ENCODE measurements at regions of chr1 and their contacts with region 1.

Region 1: DNA sequence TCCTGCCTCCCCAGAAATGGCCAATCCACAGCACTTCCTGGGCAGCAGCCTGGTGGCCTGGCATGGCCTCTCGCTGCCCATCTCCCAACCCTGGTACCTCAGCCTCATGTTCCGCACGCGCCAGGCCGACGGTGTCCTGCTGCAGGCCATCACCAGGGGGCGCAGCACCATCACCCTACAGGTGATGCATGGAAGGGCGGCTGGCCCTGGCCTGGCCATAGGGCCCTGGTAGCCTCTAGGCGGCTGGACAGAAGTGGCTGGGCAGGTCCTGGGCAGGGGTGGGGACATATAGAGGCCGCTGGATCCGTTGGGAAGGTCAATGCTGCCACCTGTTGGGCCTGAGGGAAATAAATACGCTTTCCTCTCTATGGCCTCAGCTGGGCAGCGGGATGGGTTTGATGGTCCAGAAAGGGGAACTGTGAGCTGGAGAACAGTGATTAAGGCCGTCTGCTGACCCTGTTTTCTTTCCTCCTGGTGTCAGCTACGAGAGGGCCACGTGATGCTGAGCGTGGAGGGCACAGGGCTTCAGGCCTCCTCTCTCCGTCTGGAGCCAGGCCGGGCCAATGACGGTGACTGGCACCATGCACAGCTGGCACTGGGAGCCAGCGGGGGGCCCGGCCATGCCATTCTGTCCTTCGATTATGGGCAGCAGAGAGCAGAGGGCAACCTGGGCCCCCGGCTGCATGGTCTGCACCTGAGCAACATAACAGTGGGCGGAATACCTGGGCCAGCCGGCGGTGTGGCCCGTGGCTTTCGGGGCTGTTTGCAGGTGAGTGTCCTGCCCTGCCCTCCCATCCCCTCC is 14.5 kb downstream of the CELSR2 start:
- DNase-seq: peak; percentile 97 to 98
- H3K4me3 ChIP-seq: no peak overlapping the region
- H3K27ac ChIP-seq: no peak overlapping the region
- H3K4me1 ChIP-seq: no peaks in the 10 kb centered on the region
- H3K27me3 ChIP-seq: no peaks in the 10 kb centered on the region
- CTCF ChIP-seq: peak; percentile 94 to 100 (median 98)
- POLR2A ChIP-seq: no peak

Region 2: GRCh38 chr1:109201123-109201703 is 62.6 kb before region 1 on chr1:
- intact Hi-C with region 1: loop called (anchors 5 kb)
- DNase-seq: peak; percentile 49
- H3K4me3 ChIP-seq: no peak overlapping the region
- H3K27ac ChIP-seq: no peak overlapping the region
- H3K4me1 ChIP-seq: no peaks in the 10 kb centered on the region
- H3K27me3 ChIP-seq: no peaks in the 10 kb centered on the region
- CTCF ChIP-seq: peak in 5 of 6 experiments; percentile 19 to 49 (median 42)
- POLR2A ChIP-seq: no peak

Region 3: GRCh38 chr1:109404838-109405237 is 141.0 kb after region 1 on chr1:
- intact Hi-C with region 1: loop called (anchors 5 kb)
- DNase-seq: no peak
- H3K4me3 ChIP-seq: no peak overlapping the region
- H3K27ac ChIP-seq: no peak overlapping the region
- H3K4me1 ChIP-seq: no peaks in the 10 kb centered on the region
- H3K27me3 ChIP-seq: no peaks in the 10 kb centered on the region
- CTCF ChIP-seq: no peak
- POLR2A ChIP-seq: no peak

Region 4: DNA sequence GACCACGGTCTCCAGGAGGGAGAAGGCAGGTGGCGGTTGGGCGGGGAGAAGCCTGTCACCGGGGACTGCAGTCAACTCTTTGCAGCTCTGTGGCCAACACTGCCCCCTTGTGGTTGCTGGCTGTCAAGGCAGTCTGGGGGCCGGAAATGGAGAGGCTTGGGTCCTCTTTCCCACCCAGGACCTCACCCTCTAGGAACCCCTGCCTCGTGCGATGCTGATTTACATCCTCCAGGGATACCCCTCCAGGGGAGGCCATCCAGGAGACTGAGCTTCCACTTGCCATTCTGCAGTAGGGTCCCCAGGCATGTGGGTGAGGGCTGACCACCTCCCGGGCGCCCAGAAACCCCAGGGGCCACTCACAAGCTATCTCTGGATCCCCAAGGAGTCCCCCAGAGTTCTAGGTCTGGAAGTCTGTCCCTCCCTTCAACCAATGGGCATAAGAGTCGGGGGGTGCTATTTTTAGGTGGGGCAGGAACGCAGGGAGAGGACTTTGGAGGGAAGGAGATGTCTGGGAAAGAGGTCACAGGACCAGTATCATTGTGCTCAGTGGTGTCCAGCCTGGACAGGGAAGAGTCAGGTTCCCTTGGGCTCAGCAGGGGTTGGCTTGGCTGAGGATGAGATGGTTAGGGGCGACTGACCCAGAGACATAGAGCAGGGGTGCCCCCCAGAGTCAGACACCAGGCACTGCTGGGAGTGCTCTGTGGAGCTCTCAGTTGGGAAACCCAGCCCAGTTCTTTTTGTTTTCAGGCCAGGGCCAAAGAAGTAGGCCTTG is 268.8 kb after region 1 on chr1:
- intact Hi-C with region 1: loop called (anchors 10 kb)
- DNase-seq: peak; percentile 76 to 83
- H3K4me3 ChIP-seq: no peak overlapping the region
- H3K27ac ChIP-seq: no peak overlapping the region
- H3K4me1 ChIP-seq: peaks cover 4 to 6% of the 10 kb centered on the region in 2 donors
- H3K27me3 ChIP-seq: no peaks in the 10 kb centered on the region
- CTCF ChIP-seq: peak; percentile 90 to 98 (median 96)
- POLR2A ChIP-seq: no peak

Measured in thyroid gland (tissue), 4 donors.